Ascending aorta (tissue), 2 donors: ENCODE measurements at regions of chr20 and their contacts with region 1.

Region 1: DNA sequence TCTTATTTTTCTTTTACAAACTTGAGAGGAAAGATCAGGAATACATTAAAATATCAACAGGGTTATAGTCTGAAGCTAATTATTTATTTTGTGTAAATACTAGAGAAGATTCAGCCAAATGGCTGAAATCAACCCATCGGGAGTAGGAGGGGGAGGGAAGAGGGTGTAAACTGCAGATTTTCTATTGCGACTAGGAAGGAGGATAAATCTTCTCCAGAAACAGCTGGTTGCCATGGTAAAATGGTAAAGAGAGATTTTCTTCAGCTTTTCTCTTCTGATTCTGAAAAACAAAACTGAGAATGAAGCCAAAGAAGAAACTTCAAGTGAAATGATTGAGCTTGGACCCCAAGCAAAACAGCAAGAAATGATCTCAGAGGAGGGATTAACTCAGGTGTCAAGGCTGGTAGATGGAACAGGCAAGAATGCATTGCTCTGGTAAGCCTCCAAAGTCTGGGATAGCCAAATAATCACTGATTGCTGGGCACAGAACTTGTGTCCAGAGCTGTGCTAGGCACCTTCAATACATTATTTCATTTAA is 193.5 kb upstream of the SPTLC3 start:
- DNase-seq: no peak
- H3K4me3 ChIP-seq: no peak overlapping the region
- H3K27ac ChIP-seq: no peak overlapping the region
- H3K4me1 ChIP-seq: peaks cover 0 to 5% of the 10 kb centered on the region in 2 donors
- H3K27me3 ChIP-seq: no peaks in the 10 kb centered on the region
- CTCF ChIP-seq: no peak

Region 2: DNA sequence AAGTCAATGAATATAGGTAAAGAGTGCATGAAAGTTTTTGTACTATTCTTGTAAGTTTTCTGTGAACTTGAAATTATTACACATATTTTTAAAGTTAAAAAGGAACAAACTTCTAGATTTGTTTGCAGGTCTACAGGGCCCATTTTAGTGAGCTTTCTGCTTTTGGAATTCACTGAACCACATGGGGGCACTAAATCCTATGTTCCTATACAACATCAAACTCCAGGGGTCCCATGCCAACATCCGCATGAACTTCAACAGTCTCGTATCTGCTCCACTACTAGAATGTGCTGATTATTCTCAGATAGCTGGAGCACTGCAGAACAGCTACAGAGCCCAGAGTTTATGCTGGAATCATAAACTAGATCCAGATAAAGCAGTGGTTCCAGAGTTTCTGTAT is 154.4 kb before region 1 on chr20:
- intact Hi-C with region 1: loop called (anchors 5 kb)
- DNase-seq: peak in 1 of 2 donors; percentile 68
- H3K4me3 ChIP-seq: no peak overlapping the region
- H3K27ac ChIP-seq: peak overlapping the region in 1 of 2 donors; percentile 22
- H3K4me1 ChIP-seq: no peaks in the 10 kb centered on the region
- H3K27me3 ChIP-seq: no peaks in the 10 kb centered on the region
- CTCF ChIP-seq: peak; percentile 6 to 48 (median 41)

Region 3: GRCh38 chr20:12798286-12798685 is 17.0 kb before region 1 on chr20:
- intact Hi-C with region 1: no loop called
- DNase-seq: no peak
- H3K4me3 ChIP-seq: no peak overlapping the region
- H3K27ac ChIP-seq: no peak overlapping the region
- H3K4me1 ChIP-seq: no peaks in the 10 kb centered on the region
- H3K27me3 ChIP-seq: no peaks in the 10 kb centered on the region
- CTCF ChIP-seq: no peak